Right ventricle myocardium inferior (tissue), 1 donor: ENCODE measurements at regions of chr1 and their contacts with region 1.

Region 1: GRCh38 chr1:210311726-210312493 is 16.8 kb upstream of the HHAT start:
- DNase-seq: no peak
- ATAC-seq: peak; percentile 87

Region 2: DNA sequence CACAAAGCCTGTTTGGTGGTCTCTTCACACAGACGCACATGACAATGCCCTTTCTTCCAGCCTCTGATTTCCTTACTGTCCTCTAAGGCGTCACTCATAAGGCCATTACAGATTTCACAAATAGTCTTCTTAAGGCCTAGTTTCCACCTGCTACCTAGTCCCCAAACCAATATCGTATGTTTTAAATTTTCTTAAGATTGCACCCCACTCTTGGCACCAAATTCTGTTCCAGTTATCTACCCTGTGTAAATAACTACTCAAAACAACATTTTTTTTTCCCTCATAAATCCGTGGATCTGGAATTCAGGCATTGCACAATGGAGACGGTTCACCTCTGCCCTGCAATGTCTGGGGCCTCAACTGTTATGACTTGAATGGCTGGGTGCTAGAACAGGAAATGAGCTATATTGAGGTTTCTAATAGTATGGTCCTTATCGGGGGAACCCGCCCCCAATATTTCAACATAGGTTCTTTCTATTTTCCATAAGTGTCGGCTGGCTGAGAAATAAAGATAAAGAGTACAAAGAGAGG is 116.2 kb before region 1 on chr1:
- intact Hi-C with region 1: loop called (anchors 5 kb)
- DNase-seq: no peak
- ATAC-seq: no peak

Region 3: DNA sequence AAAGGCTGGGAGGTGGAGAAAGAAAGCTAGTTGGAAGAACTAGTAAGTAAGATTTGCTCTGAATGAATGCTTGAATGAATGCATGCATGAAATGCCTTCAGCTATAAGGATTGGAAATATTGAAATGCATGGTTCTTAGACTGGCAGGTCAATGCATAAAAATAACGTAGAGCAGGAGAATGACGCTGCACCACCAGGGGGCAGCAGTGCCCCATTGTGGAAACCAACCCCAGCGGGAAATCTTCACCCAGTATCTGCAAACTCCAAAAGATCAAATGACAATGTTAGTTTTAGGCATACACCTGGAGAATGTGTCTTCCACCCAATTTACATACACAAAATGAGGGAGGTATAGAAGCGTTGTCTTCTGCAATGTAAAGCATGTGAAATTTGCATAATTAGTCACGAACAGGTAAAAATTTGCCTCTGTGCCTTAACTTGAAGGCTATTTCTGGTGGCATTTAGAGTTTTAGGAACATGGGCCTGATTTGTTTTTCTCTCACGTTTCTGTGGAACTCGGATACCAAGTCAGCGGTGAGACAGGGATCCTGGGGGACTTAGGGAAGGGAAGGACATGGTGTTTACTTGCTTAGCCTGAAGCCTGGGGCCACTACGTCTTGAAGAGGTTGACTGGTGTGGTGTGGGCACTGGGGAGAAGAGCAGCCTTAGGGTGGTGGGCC is 95.4 kb after region 1 on chr1:
- intact Hi-C with region 1: no loop called
- DNase-seq: no peak
- ATAC-seq: no peak